Activated CD4-positive, alpha-beta T cell treated with anti-CD3 and anti-CD28 coated beads, Interleukin-2, amount 10 ng/mL, durations not matched to agents 24 days and 14 days (primary cell): ENCODE measurements at regions of chr19 and their contacts with region 1.

Region 1: GRCh38 chr19:55632463-55632834 is 8.1 kb upstream of the ZNF784 start:
- DNase-seq: peak; percentile 97
- H3K4me3 Mint-ChIP-seq: no peak overlapping the region
- H3K27ac Mint-ChIP-seq: peak overlapping the region; percentile 3
- H3K4me1 Mint-ChIP-seq: peaks cover 38% of the 10 kb centered on the region
- H3K27me3 Mint-ChIP-seq: peaks cover 13% of the 10 kb centered on the region

Region 2: GRCh38 chr19:55467236-55468053 is 165.0 kb before region 1 on chr19:
- intact Hi-C with region 1: loop called (anchors 1 kb)
- DNase-seq: peak; percentile 93
- H3K4me3 Mint-ChIP-seq: no peak overlapping the region
- H3K27ac Mint-ChIP-seq: no peak overlapping the region
- H3K4me1 Mint-ChIP-seq: peaks cover 6% of the 10 kb centered on the region
- H3K27me3 Mint-ChIP-seq: no peaks in the 10 kb centered on the region

Region 3: GRCh38 chr19:55586976-55587668 is 45.3 kb before region 1 on chr19:
- intact Hi-C with region 1: no loop called
- DNase-seq: peak; percentile 98
- H3K4me3 Mint-ChIP-seq: peak overlapping the region; percentile 85
- H3K27ac Mint-ChIP-seq: no peak overlapping the region
- H3K4me1 Mint-ChIP-seq: peaks cover 14% of the 10 kb centered on the region
- H3K27me3 Mint-ChIP-seq: peaks cover 26% of the 10 kb centered on the region

Region 4: GRCh38 chr19:55643348-55644176 is 11.1 kb after region 1 on chr19 and contains the start of gene ZNF581:
- intact Hi-C with region 1: loop called (anchors 1 kb)
- DNase-seq: peak; percentile 95
- H3K4me3 Mint-ChIP-seq: peak within 1 kb of the TSS; percentile 90
- H3K27ac Mint-ChIP-seq: peak within 1 kb of the TSS; percentile 98
- H3K4me1 Mint-ChIP-seq: peaks cover 27% of the 10 kb centered on the region
- H3K27me3 Mint-ChIP-seq: no peaks in the 10 kb centered on the region
- total RNA-seq, gene ZNF581: 32.7 and 33.0 TPM in 2 replicates